IMR-90 (cell line): ENCODE measurements at regions of chr2 and their contacts with region 1.

Region 1: GRCh38 chr2:27860111-27860510 is 30.1 kb downstream of the RBKS start:
- DNase-seq: peak; percentile 90
- ATAC-seq: peak; percentile 66
- H3K4me3 ChIP-seq: no peak overlapping the region
- H3K27ac ChIP-seq: no peak overlapping the region
- H3K4me1 ChIP-seq: peaks cover 11% of the 10 kb centered on the region; the same call in 1 of the 2 replicates
- H3K27me3 ChIP-seq: no peaks in the 10 kb centered on the region
- CTCF ChIP-seq: no peak
- POLR2A ChIP-seq: no peak
- RAD21 ChIP-seq: no peak

Region 2: GRCh38 chr2:27823569-27823968 is 36.5 kb before region 1 on chr2:
- CTCF ChIA-PET with region 1: no interaction called
- POLR2A ChIA-PET with region 1: interaction called, 13 read pairs
- dilution Hi-C with region 1: no loop called
- in situ Hi-C with region 1: no loop called
- intact Hi-C with region 1: no loop called
- DNase-seq: no peak
- ATAC-seq: no peak
- H3K4me3 ChIP-seq: no peak overlapping the region
- H3K27ac ChIP-seq: no peak overlapping the region
- H3K4me1 ChIP-seq: no peaks in the 10 kb centered on the region
- H3K27me3 ChIP-seq: no peaks in the 10 kb centered on the region
- CTCF ChIP-seq: no peak
- POLR2A ChIP-seq: no peak
- RAD21 ChIP-seq: no peak

Region 3: DNA sequence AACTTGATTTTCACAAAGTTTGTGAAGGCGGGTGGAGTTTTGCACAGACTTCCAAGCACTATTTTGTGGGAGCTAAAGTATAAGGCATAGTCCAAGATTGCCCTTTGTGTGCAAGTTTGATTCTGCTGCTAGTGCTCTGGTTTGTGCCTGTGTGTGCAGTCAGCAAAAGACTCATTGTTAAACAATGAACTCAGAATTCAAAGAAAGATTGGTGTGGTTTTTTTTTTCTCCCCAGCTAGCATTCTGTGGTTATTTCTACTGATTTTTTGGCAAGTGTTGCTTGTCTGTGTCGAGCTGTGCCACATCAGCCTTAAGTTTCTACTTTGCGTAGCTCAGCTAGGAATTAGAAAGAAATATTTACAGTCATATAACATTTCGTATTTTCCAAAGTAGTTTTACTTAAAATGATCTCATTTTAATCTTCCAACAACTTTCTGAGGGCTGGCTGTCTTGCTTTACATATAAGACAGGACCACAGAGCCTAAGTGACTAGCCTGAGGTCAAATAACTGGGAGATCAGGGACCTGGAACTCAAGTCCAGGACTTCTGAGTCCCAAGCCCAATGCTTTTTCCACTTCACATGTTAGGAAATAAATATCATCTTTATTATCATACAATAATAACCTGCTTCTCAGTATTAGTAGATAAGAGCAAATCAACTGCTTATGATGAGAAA is 100.3 kb after region 1 on chr2:
- CTCF ChIA-PET with region 1: no interaction called
- POLR2A ChIA-PET with region 1: interaction called, 13 read pairs
- dilution Hi-C with region 1: no loop called
- in situ Hi-C with region 1: no loop called
- intact Hi-C with region 1: no loop called
- DNase-seq: peak; percentile 93
- ATAC-seq: peak; percentile 71
- H3K4me3 ChIP-seq: no peak overlapping the region
- H3K27ac ChIP-seq: peak overlapping the region; percentile 75
- H3K4me1 ChIP-seq: peaks cover 16% of the 10 kb centered on the region
- H3K27me3 ChIP-seq: no peaks in the 10 kb centered on the region
- CTCF ChIP-seq: no peak
- POLR2A ChIP-seq: no peak
- RAD21 ChIP-seq: no peak

Region 4: GRCh38 chr2:28134262-28134812 is 274.2 kb after region 1 on chr2:
- CTCF ChIA-PET with region 1: interaction called, 10 read pairs
- POLR2A ChIA-PET with region 1: no interaction called
- dilution Hi-C with region 1: no loop called
- in situ Hi-C with region 1: no loop called
- intact Hi-C with region 1: no loop called
- DNase-seq: no peak
- ATAC-seq: no peak
- H3K4me3 ChIP-seq: no peak overlapping the region
- H3K27ac ChIP-seq: no peak overlapping the region
- H3K4me1 ChIP-seq: peaks cover 2% of the 10 kb centered on the region; the same call in 1 of the 2 replicates
- H3K27me3 ChIP-seq: no peaks in the 10 kb centered on the region
- CTCF ChIP-seq: no peak
- POLR2A ChIP-seq: no peak
- RAD21 ChIP-seq: no peak